B cell (primary cell): ENCODE measurements at regions of chr6 and their contacts with region 1.

Region 1: GRCh38 chr6:166402582-166403277 is 20.0 kb upstream of the MPC1 start:
- DNase-seq: no peak
- ATAC-seq: no peak
- H3K4me3 ChIP-seq: no peak overlapping the region
- H3K4me3 Mint-ChIP-seq: no peak overlapping the region
- H3K27ac ChIP-seq: no peak overlapping the region
- H3K27ac Mint-ChIP-seq: no peak overlapping the region
- H3K4me1 ChIP-seq: no peaks in the 10 kb centered on the region
- H3K4me1 Mint-ChIP-seq: no peaks in the 10 kb centered on the region
- H3K27me3 ChIP-seq: peaks cover 0 to 2% (median 0%) of the 10 kb centered on the region in 4 experiments
- H3K27me3 Mint-ChIP-seq: peaks cover 13% of the 10 kb centered on the region
- CTCF ChIP-seq: no peak

Region 2: DNA sequence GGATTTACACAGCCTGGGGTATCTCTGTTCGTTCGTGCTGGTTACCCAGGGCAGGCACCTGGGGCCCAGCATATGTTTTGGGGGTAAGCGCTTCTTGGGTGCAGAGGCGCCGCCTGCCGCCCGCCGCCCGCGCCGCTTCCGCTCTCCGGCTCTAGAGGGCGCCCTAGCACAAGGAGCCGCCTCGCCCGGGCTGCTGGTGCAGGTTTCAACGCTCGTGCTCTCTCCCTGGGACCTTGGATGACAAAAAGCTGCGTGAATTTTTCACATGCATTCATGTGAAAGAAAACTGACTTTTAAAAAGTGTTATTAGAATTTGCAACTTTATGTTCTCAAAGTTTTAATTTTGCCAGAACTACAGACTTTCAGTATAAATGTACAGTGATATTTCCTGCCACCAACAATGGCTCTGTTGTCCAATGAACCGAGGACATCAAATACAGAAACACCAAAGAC is 127.0 kb before region 1 on chr6:
- CTCF ChIA-PET with region 1: interaction called, 149 read pairs
- POLR2A ChIA-PET with region 1: no interaction called
- intact Hi-C with region 1: loop called (anchors 1 kb)
- DNase-seq: peak; percentile 82
- ATAC-seq: peak; percentile 89
- H3K4me3 ChIP-seq: no peak overlapping the region
- H3K4me3 Mint-ChIP-seq: no peak overlapping the region
- H3K27ac ChIP-seq: no peak overlapping the region
- H3K27ac Mint-ChIP-seq: no peak overlapping the region
- H3K4me1 ChIP-seq: peaks cover 0 to 8% of the 10 kb centered on the region in 2 donors
- H3K4me1 Mint-ChIP-seq: peaks cover 14% of the 10 kb centered on the region
- H3K27me3 ChIP-seq: no peaks in the 10 kb centered on the region
- H3K27me3 Mint-ChIP-seq: peaks cover 2% of the 10 kb centered on the region
- CTCF ChIP-seq: peak; percentile 100

Region 3: GRCh38 chr6:166296035-166296883 is 106.5 kb before region 1 on chr6:
- CTCF ChIA-PET with region 1: interaction called, 266 read pairs
- POLR2A ChIA-PET with region 1: no interaction called
- intact Hi-C with region 1: no loop called
- DNase-seq: no peak
- ATAC-seq: no peak
- H3K4me3 ChIP-seq: no peak overlapping the region
- H3K4me3 Mint-ChIP-seq: no peak overlapping the region
- H3K27ac ChIP-seq: no peak overlapping the region
- H3K27ac Mint-ChIP-seq: no peak overlapping the region
- H3K4me1 ChIP-seq: peaks cover 5 to 10% of the 10 kb centered on the region in 2 donors
- H3K4me1 Mint-ChIP-seq: peaks cover 19% of the 10 kb centered on the region
- H3K27me3 ChIP-seq: peaks cover 0 to 3% (median 0%) of the 10 kb centered on the region in 4 experiments
- H3K27me3 Mint-ChIP-seq: peaks cover 26% of the 10 kb centered on the region
- CTCF ChIP-seq: no peak

Region 4: DNA sequence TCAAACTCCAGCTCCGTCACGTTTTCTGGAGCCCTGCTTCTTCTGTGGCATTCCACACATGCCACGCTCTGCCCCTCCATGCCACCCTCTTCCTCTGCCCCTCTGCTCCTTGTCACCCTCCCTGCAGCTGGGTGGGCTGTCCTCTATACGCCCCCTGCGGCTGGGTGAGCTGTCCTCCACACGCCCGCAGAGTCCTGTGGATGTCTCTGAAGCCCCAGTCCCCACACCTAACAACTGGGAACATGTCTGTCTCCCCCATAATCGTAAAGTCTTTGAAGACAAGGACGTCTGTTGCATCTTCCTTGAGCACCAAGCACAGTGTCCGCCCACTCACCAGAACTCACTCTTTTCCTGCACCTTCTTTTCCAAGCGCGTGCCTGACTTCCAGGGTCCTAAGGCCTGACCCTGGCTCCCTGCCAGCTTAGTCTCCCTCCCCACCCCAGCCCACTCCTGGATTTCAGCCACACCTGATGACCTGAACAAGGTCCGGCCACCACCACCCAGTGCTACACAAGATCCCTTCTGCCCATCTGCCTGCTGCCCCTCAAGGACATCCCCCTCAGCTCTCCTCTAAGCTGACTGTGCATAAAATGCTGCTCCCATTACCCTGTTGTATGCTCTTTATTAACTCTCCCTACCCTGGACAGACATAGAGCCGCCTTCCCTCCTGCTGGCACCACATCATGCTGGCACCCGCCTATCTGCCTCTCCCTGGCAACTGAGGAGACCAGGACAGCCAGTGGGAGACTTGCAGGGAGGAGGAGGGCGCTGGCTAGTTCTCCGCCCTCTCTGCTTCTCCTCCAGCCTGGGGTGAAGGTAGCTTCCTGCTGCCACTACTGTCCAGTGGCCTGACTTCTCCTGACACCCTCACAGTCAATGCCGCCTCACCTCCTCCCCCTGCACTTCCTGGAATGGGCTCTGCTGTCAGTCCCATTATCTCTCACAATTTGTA is 83.8 kb before region 1 on chr6:
- CTCF ChIA-PET with region 1: interaction called, 266 read pairs
- POLR2A ChIA-PET with region 1: interaction called, 4 read pairs
- intact Hi-C with region 1: no loop called
- DNase-seq: no peak
- ATAC-seq: no peak
- H3K4me3 ChIP-seq: no peak overlapping the region
- H3K4me3 Mint-ChIP-seq: no peak overlapping the region
- H3K27ac ChIP-seq: no peak overlapping the region
- H3K27ac Mint-ChIP-seq: no peak overlapping the region
- H3K4me1 ChIP-seq: no peaks in the 10 kb centered on the region
- H3K4me1 Mint-ChIP-seq: no peaks in the 10 kb centered on the region
- H3K27me3 ChIP-seq: no peaks in the 10 kb centered on the region
- H3K27me3 Mint-ChIP-seq: no peaks in the 10 kb centered on the region
- CTCF ChIP-seq: no peak

Region 5: GRCh38 chr6:166377721-166378120 is 25.0 kb before region 1 on chr6:
- CTCF ChIA-PET with region 1: interaction called, 21 read pairs
- POLR2A ChIA-PET with region 1: no interaction called
- intact Hi-C with region 1: loop called (anchors 2 kb)
- DNase-seq: no peak
- ATAC-seq: no peak
- H3K4me3 ChIP-seq: no peak overlapping the region
- H3K4me3 Mint-ChIP-seq: no peak overlapping the region
- H3K27ac ChIP-seq: no peak overlapping the region
- H3K27ac Mint-ChIP-seq: no peak overlapping the region
- H3K4me1 ChIP-seq: peaks cover 4 to 7% of the 10 kb centered on the region in 2 donors
- H3K4me1 Mint-ChIP-seq: peaks cover 10% of the 10 kb centered on the region
- H3K27me3 ChIP-seq: no peaks in the 10 kb centered on the region
- H3K27me3 Mint-ChIP-seq: no peaks in the 10 kb centered on the region
- CTCF ChIP-seq: no peak